PC-3 (cell line): ENCODE measurements at regions of chr5 and their contacts with region 1.

Region 1: DNA sequence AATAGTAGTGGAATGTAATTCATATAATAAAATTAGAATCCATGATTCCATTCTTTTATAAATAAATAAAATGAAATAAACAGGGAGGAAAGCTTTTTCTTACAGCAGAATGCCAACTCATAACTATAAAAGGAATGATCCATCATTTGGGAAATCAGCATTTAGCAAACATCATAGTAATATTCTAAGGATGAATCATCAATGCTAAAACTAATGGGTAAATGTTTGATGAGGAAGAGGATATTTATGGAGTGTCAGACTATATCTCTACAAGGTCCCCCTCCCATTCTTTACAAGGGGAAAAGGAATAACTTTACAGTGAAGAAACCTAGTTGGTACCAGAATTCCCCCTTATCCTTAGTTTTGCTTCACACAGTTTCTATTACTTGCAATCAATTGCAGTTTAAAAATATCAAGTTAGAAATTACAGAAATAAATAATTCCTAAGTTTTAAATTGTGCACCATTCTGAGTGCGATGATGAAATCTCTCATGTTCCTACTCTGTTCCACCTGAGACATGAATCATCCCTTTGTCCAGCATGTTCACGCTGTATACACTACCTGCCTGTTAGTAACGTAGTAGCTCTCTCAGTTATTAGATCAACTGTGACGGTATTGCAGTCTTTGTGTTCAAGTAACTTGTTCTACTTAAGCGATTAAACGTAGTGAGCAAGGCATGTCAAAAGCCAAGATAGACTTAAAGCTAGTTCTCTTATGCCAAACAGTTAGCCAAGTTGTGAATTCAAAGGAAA is 14.2 kb upstream of the JAKMIP2 start:
- DNase-seq: peak; percentile 90
- ATAC-seq: peak; percentile 93
- H3K4me3 ChIP-seq: peak overlapping the region; percentile 47
- H3K27ac ChIP-seq: peak overlapping the region; percentile 73
- H3K4me1 ChIP-seq: peaks cover 27% of the 10 kb centered on the region
- H3K27me3 ChIP-seq: no peaks in the 10 kb centered on the region
- CTCF ChIP-seq: no peak

Region 2: DNA sequence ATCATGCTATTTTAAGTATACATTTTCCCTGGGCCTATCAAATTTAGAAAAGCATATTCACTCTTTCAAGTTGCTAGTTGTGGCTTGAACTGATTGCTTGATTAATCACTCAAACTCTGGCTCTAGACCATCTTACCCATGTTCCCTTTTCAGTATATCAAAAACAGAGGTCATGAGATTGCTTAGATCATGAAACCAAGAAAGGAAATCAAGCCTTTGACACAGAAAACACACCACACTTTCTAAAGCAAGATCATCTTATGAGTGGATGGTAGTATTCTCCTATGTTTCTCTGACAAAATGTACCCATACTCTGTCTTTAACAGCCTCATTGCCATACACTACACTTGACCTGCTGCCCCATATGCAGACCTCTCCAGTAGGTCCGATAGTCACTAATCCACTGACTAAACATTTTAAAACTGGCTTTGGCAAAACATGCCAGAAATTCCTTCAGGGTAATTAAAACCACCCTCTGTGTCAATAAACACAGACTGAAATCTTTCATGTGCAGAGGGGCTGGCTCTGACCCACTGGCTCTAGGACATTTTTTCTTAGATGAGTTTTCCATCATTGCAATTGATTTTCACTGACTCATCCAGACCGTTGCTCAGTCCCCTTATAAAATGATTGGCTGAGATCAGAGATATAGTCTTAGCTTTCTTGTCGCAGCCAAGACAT is 936.4 kb before region 1 on chr5:
- CTCF ChIA-PET with region 1: no interaction called
- POLR2A ChIA-PET with region 1: no interaction called
- intact Hi-C with region 1: no loop called
- DNase-seq: peak; percentile 57
- ATAC-seq: no peak
- H3K4me3 ChIP-seq: no peak overlapping the region
- H3K27ac ChIP-seq: no peak overlapping the region
- H3K4me1 ChIP-seq: no peaks in the 10 kb centered on the region; the same call in 1 of the 2 replicates
- H3K27me3 ChIP-seq: no peaks in the 10 kb centered on the region
- CTCF ChIP-seq: no peak

Region 3: DNA sequence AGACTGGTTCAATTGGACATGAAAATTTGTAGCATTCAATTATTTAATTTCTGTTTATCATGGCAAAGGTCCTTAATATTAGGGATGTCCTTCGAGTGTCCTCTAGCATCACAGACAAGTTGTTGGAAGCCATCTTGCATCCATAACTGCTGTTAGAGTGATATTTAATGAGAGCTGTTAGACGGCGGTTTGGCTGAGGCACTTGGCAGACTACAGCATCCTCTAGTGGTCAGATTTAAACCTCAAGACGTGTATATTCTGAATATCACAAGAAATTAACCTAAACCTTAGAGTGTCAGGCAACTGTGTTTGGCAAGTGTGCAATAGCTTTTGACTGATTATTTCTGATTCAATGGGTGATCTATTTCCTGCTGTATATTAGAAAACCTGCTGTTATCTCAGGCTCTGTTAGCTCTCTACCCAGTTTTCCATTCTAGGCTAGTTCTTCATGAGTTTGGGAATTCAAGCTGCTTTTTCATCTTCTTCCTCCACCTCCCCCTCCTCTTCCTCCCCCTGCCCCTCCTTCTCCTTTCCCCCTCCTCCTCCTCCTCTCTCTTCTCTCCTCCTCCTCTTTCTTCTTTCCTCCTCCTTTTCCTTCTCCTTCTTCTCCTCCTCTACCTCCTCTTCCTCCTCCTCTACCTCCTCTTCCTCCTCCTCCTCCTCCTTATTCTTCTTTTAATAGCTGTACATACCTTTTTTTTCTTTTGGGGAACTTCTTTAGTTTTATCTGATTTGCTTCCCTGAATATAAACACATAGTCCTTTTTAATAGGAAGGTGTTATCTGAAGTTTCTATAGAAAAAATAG is 26.2 kb after region 1 on chr5:
- CTCF ChIA-PET with region 1: interaction called, 5 read pairs
- POLR2A ChIA-PET with region 1: no interaction called
- intact Hi-C with region 1: loop called (anchors 2 kb)
- DNase-seq: peak; percentile 90
- ATAC-seq: peak; percentile 71
- H3K4me3 ChIP-seq: no peak overlapping the region
- H3K27ac ChIP-seq: no peak overlapping the region
- H3K4me1 ChIP-seq: peaks cover 16% of the 10 kb centered on the region
- H3K27me3 ChIP-seq: no peaks in the 10 kb centered on the region
- CTCF ChIP-seq: peak; percentile 99

Region 4: DNA sequence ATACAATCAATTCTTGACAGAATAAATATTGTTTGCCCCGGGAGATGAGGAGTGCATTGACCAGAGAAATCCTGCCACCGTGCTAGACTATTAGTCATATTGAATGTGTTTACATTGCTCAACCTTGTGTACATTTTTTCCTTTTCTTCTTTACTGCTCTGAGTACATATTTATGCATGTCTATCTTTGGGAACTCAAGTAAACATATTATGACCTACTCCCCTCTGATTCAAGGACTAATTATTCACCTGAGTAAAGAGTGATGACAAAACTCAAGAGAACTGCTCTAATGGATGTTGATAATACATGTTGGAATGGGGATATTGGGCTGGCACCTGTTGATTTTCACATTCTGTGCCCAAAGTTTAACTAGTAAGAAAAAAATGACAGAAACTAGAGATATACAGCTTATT is 38.7 kb after region 1 on chr5:
- CTCF ChIA-PET with region 1: no interaction called
- POLR2A ChIA-PET with region 1: no interaction called
- intact Hi-C with region 1: loop called (anchors 1 kb)
- DNase-seq: peak; percentile 97
- ATAC-seq: peak; percentile 98
- H3K4me3 ChIP-seq: no peak overlapping the region
- H3K27ac ChIP-seq: peak overlapping the region; percentile 12
- H3K4me1 ChIP-seq: peaks cover 23% of the 10 kb centered on the region
- H3K27me3 ChIP-seq: no peaks in the 10 kb centered on the region
- CTCF ChIP-seq: no peak

Region 5: DNA sequence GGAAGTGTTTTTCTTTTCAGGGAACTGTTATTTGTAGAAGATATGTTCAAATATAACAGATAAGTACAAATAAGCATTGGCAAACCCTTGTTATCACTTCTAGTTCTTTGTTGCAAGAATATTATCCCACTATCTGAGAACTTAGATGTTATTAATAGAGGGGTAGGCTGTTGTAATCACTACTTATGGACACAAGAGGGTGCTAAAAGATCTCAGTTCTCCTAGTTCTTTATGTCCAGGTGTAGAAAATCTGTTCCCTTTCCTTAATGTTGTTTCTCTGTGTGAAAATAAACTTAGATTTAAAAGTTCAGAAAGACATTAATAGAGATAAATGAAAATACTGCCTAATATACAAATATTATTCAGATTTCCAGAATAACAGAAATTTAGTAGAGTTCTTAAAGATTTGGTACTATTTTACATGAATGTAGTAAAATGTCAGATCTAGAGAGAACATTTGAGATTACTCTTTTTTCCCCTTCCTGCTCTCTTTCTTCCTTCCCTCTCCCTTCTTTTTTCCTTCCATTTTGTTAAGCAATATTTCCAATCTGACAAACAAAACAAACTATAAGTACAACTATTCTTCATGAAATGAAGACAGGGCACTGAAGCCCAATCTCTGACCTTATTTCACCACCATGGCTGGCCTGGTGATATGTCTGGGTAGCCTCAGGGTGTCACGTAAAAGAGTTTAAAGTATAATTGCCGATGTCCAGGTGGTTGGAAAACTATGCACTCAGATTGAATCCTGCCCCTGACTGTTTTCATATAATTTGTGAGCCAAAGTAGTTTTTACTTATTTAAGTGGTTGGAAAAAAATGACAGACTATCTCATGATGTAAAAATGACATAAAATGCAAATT is 153.2 kb after region 1 on chr5:
- CTCF ChIA-PET with region 1: no interaction called
- POLR2A ChIA-PET with region 1: no interaction called
- intact Hi-C with region 1: no loop called
- DNase-seq: peak; percentile 85
- ATAC-seq: peak; percentile 93
- H3K4me3 ChIP-seq: no peak overlapping the region
- H3K27ac ChIP-seq: no peak overlapping the region
- H3K4me1 ChIP-seq: no peaks in the 10 kb centered on the region
- H3K27me3 ChIP-seq: no peaks in the 10 kb centered on the region
- CTCF ChIP-seq: peak; percentile 96